ENCODE measurements at regions of chr1 and their contacts with region 1.

Region 1: GRCh38 chr1:8015036-8015808 is 10.9 kb downstream of the ERRFI1 start:
- DNase-seq: no peak
- ATAC-seq: peak; percentile 33
- H3K4me3 Mint-ChIP-seq: no peak overlapping the region
- H3K27ac Mint-ChIP-seq: peak overlapping the region; percentile 87
- H3K4me1 Mint-ChIP-seq: peaks cover 54% of the 10 kb centered on the region
- H3K27me3 Mint-ChIP-seq: no peaks in the 10 kb centered on the region
- CTCF ChIP-seq: peak; percentile 50; the same call in 1 of the 2 replicates

Region 2: DNA sequence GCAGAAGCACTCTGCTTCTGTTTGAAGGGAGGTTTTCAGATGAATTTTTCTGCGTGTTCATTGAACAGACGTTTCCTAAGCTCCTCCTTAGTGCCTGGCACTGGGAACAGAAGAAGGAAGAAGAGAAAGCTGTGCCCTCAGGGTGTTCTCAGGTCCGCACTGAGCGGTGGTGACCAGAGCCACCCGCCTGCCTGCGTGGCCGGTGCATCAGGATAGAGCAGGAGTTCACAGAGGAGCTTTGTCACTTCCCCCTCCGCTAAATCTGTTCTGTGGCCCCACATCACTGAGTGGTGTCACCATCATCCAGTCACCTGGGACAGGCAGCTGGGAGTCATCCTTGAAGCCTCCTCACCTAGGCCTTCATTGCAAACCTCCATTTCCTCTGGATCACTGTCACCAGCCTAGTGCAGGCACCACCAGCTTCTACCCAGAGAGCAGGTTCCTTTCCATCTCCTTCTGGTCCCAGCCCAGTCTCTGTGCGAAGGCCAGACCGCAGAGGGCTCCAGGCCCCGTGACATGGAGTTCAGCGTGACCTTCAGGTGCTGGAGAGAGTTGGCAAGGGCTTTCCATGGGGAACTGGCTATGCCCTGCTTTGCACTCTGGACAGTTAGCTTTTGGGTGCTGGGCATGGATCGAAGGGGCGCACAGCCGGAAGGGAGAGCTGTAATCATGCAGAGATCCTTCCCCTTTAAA is 32.0 kb before region 1 on chr1:
- CTCF ChIA-PET with region 1: interaction called, 17 read pairs
- POLR2A ChIA-PET with region 1: no interaction called
- DNase-seq: no peak
- ATAC-seq: no peak
- H3K4me3 Mint-ChIP-seq: no peak overlapping the region
- H3K27ac Mint-ChIP-seq: peak overlapping the region; percentile 93
- H3K4me1 Mint-ChIP-seq: peaks cover 11% of the 10 kb centered on the region
- H3K27me3 Mint-ChIP-seq: no peaks in the 10 kb centered on the region
- CTCF ChIP-seq: no peak

Region 3: GRCh38 chr1:8004803-8005554 is 10.2 kb before region 1 on chr1:
- CTCF ChIA-PET with region 1: interaction called, 20 read pairs
- POLR2A ChIA-PET with region 1: no interaction called
- DNase-seq: no peak
- ATAC-seq: no peak; the same call in 1 of the 2 replicates
- H3K4me3 Mint-ChIP-seq: no peak overlapping the region
- H3K27ac Mint-ChIP-seq: peak overlapping the region; percentile 86
- H3K4me1 Mint-ChIP-seq: peaks cover 47% of the 10 kb centered on the region
- H3K27me3 Mint-ChIP-seq: no peaks in the 10 kb centered on the region
- CTCF ChIP-seq: no peak

Region 4: DNA sequence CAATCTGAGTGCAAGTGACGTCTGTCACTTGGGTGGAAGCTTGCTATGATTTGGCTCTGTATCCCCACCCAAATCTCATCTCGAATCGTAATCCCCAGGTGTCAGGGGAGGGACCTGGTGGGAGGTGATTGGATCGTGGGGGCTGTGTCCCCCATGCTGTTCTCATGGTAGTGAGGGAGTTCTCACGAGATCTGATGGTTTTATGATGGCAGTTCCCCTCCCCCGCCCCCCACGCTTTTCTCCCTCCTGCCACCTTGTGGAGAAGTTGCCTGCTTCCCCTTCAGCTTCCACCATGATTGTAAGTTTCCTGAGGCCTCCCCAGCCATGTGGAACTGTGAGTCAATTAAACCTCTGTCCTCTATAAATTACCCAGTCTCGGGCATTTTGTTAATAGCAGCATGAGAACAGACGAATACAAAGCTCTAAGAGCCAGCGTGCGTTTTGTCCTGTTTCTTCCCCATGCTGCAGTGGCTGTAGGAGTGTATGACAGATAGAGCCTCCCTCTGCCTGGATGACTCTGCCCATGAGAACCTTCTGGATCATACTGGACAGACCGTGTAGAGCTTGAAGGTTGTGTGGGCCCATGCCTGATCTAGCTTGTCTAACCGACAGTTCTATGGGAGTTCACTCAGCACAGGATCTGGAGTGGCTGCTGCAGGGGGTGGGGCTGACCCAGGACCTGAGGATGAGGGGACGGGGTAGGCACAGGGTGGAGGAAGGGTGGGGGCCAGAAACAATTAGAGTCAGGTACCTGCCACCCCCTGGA is 150.6 kb after region 1 on chr1:
- CTCF ChIA-PET with region 1: interaction called, 30 read pairs
- POLR2A ChIA-PET with region 1: no interaction called
- DNase-seq: peak; percentile 31
- ATAC-seq: peak; percentile 14
- H3K4me3 Mint-ChIP-seq: no peak overlapping the region
- H3K27ac Mint-ChIP-seq: peak overlapping the region; percentile 91
- H3K4me1 Mint-ChIP-seq: peaks cover 46% of the 10 kb centered on the region
- H3K27me3 Mint-ChIP-seq: no peaks in the 10 kb centered on the region
- CTCF ChIP-seq: no peak

Region 5: GRCh38 chr1:8348777-8349491 is 333.7 kb after region 1 on chr1:
- CTCF ChIA-PET with region 1: interaction called, 45 read pairs
- POLR2A ChIA-PET with region 1: no interaction called
- DNase-seq: peak; percentile 86
- ATAC-seq: peak; percentile 73
- H3K4me3 Mint-ChIP-seq: no peak overlapping the region
- H3K27ac Mint-ChIP-seq: no peak overlapping the region
- H3K4me1 Mint-ChIP-seq: peaks cover 26% of the 10 kb centered on the region
- H3K27me3 Mint-ChIP-seq: no peaks in the 10 kb centered on the region
- CTCF ChIP-seq: peak; percentile 80

Measured in WTC11 (cell line).